ENCODE measurements at regions of chr10 and their contacts with region 1.

Region 1: GRCh38 chr10:87094373-87095235 is at the starts of genes GLUD1 and SHLD2:
- DNase-seq: peak; percentile 90 to 98
- H3K4me3 ChIP-seq: peak within 1 kb of the TSS; percentile 81
- CTCF ChIP-seq: no peak
- POLR2A ChIP-seq: peak in 1 of 2 donors; percentile 54
- total RNA-seq, gene GLUD1: 200 to 262 (median 230) TPM
- total RNA-seq, gene SHLD2: 14.9 to 26.2 (median 21.6) TPM

Region 2: DNA sequence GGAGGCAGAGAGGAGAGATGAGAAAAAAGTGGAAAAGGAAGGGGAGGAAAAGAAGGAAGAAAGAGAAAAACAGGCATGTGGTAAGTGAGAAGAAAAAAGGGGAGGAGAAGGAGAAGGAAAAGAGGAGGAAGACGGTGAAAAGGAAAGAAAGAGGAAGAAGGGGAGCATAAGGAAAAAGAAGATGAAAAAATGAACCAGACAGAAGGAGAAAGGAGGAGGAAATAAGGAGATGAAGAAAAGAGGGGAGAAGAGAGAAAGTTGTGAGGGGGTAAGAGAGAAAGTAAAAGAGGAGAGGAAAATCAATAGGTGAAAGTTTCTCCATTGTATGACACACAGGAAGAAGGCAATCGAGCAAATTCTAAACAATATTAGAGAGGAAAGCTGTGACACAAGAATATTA is 1391.8 kb before region 1 on chr10:
- intact Hi-C with region 1: no loop called
- DNase-seq: no peak
- H3K4me3 ChIP-seq: no peak overlapping the region
- CTCF ChIP-seq: no peak
- POLR2A ChIP-seq: no peak

Region 3: GRCh38 chr10:86971232-86971991 is 123.2 kb before region 1 on chr10:
- intact Hi-C with region 1: loop called (anchors 5 kb)
- DNase-seq: peak; percentile 91 to 98
- H3K4me3 ChIP-seq: peak overlapping the region; percentile 64
- CTCF ChIP-seq: no peak
- POLR2A ChIP-seq: no peak

Region 4: GRCh38 chr10:86981716-86982115 is 112.9 kb before region 1 on chr10:
- intact Hi-C with region 1: no loop called
- DNase-seq: no peak
- H3K4me3 ChIP-seq: no peak overlapping the region
- CTCF ChIP-seq: no peak
- POLR2A ChIP-seq: no peak

Measured in lower leg skin (tissue), 4 donors.